Activated CD8-positive, alpha-beta T cell treated with anti-CD3 and anti-CD28 coated beads, Interleukin-2, amount 10 ng/mL, durations not matched to agents 7 days and 5 days (primary cell): ENCODE measurements at regions of chr12 and their contacts with region 1.

Region 1: GRCh38 chr12:118016424-118017264 is at the start of gene RFC5:
- DNase-seq: peak; percentile 98
- ATAC-seq: peak; percentile 96
- H3K4me3 Mint-ChIP-seq: peak within 1 kb of the TSS; percentile 98
- H3K27ac Mint-ChIP-seq: peak within 1 kb of the TSS; percentile 94
- H3K4me1 Mint-ChIP-seq: peaks cover 31% of the 10 kb centered on the region
- H3K27me3 Mint-ChIP-seq: peaks cover 6% of the 10 kb centered on the region
- total RNA-seq, gene RFC5: 52.5 to 57.6 TPM

Region 2: GRCh38 chr12:118061011-118061875 is 44.6 kb after region 1 on chr12 and contains the start of gene WSB2:
- CTCF ChIA-PET with region 1: interaction called, 21 read pairs
- POLR2A ChIA-PET with region 1: interaction called, 10 read pairs
- DNase-seq: peak; percentile 64
- ATAC-seq: peak; percentile 27
- H3K4me3 Mint-ChIP-seq: peak within 1 kb of the TSS; percentile 94
- H3K27ac Mint-ChIP-seq: peak within 1 kb of the TSS; percentile 94
- H3K4me1 Mint-ChIP-seq: peaks cover 59% of the 10 kb centered on the region
- H3K27me3 Mint-ChIP-seq: no peaks in the 10 kb centered on the region
- total RNA-seq, gene WSB2: 44.6 to 45.0 TPM